ENCODE measurements at regions of chr19 and their contacts with region 1.

Region 1: DNA sequence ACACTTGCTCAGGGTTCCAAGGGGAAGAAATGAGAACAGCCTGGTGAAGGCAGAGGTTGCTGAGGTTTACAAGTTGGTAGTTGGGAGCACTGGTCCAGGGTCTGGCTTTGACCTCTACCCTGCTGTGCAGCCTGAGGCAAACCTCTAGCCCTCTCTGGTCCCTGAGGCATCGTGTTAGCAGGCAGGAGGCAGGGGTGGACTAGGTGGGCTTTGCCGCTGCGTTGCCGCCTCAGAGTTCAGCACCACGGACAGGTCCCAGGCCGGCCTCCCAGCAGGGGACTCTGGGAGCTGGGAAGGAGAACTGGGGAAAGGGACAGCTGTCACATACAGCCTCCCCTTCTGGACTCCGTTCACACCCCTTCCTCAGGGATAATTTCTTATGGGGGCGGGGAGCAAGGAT is 3.1 kb downstream of the NCAN start:
- DNase-seq: no peak
- ATAC-seq: peak; percentile 51 to 71; a peak in 4 of 6 replicates
- H3K4me3 ChIP-seq: no peak overlapping the region
- H3K27ac ChIP-seq: no peak overlapping the region
- H3K4me1 ChIP-seq: no peaks in the 10 kb centered on the region
- CTCF ChIP-seq: no peak
- EP300 ChIP-seq: no peak
- POLR2A ChIP-seq: no peak
- RAD21 ChIP-seq: no peak

Region 2: GRCh38 chr19:19145684-19146608 is 68.9 kb before region 1 on chr19:
- CTCF ChIA-PET with region 1: no interaction called
- POLR2A ChIA-PET with region 1: no interaction called
- DNase-seq: peak; percentile 32 to 55
- ATAC-seq: peak; percentile 80 to 89; a peak in 5 of 6 replicates
- H3K4me3 ChIP-seq: no peak overlapping the region
- H3K27ac ChIP-seq: peak overlapping the region in 1 of 2 experiments; percentile 63; a peak in 2 of 6 replicates
- H3K4me1 ChIP-seq: no peaks in the 10 kb centered on the region
- CTCF ChIP-seq: peak; percentile 65
- EP300 ChIP-seq: no peak
- POLR2A ChIP-seq: no peak
- RAD21 ChIP-seq: peak; percentile 77 to 79

Region 3: DNA sequence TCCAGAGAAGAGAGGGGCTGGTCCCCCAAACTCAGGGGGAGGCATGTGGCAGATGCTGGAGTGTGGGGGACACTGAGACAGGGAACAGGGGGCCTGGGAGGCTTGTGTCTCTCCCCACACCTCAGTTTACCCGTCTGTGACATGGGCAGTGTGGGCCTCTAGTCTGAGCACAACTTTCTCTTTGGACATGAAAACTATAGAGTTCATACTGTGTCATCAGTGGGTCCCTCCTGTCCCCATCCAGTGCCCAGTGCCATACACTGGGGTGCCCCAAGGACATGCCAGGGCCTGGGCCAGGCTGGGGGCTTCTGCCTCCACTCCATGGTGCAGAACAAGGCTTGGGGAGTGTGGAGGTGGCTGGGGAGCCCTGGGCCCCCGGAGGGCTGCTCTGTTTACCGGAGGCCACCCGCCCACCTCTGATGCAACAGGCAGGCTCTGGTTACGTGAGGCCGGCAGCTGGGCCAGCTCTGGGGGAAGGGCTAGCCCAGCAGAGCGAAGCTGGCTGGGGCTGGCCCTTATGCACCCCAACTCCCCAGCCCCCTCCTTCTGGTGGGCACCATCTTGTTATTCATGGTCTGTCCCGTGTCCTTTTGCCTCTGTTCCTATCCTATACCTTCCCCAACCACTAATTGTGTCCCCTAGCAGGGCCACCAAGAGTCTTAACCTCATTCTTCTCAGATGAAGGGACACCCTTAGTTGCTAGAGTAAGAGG is 42.9 kb before region 1 on chr19:
- CTCF ChIA-PET with region 1: no interaction called
- POLR2A ChIA-PET with region 1: no interaction called
- DNase-seq: no peak
- ATAC-seq: no peak
- H3K4me3 ChIP-seq: no peak overlapping the region
- H3K27ac ChIP-seq: peak overlapping the region in 1 of 2 experiments; percentile 73; a peak in 4 of 6 replicates
- H3K4me1 ChIP-seq: peaks cover 5% of the 10 kb centered on the region; the same call in 1 of the 3 replicates
- CTCF ChIP-seq: no peak
- EP300 ChIP-seq: no peak
- POLR2A ChIP-seq: no peak
- RAD21 ChIP-seq: no peak

Region 4: DNA sequence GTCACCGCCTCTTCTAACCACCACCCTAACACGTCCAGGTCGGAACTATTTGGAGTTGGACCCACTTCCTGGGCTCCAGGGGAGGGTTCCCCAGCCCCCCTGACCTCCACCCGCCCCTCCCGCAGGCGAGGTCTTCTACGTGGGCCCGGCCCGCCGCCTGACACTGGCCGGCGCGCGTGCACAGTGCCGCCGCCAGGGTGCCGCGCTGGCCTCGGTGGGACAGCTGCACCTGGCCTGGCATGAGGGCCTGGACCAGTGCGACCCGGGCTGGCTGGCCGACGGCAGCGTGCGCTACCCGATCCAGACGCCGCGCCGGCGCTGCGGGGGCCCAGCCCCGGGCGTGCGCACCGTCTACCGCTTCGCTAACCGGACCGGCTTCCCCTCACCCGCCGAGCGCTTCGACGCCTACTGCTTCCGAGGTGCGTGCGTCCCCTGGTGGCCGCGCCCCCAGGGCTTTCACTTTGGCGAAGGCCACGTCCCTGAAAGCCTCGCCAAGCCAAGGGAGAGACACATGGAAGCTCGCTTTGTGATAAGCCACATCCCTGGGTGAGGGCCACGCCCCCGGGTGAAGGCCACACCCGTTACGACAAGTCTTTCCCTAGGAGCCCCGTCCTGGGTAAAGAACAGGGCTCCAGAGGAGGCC is 10.1 kb after region 1 on chr19:
- CTCF ChIA-PET with region 1: interaction called, 13 read pairs
- POLR2A ChIA-PET with region 1: no interaction called
- DNase-seq: peak; percentile 84 to 92
- ATAC-seq: peak; percentile 93
- H3K4me3 ChIP-seq: peak overlapping the region; percentile 45
- H3K27ac ChIP-seq: peak overlapping the region; percentile 55 to 78
- H3K4me1 ChIP-seq: 0 out of 3 replicates have a peak, but pooled peaks cover 6% of the 10 kb centered on the region
- CTCF ChIP-seq: peak; percentile 67
- EP300 ChIP-seq: no peak
- POLR2A ChIP-seq: no peak
- RAD21 ChIP-seq: peak; percentile 45 to 48

Measured in A549 (cell line).